ENCODE measurements at regions of chr21 and their contacts with region 1.

Region 1: DNA sequence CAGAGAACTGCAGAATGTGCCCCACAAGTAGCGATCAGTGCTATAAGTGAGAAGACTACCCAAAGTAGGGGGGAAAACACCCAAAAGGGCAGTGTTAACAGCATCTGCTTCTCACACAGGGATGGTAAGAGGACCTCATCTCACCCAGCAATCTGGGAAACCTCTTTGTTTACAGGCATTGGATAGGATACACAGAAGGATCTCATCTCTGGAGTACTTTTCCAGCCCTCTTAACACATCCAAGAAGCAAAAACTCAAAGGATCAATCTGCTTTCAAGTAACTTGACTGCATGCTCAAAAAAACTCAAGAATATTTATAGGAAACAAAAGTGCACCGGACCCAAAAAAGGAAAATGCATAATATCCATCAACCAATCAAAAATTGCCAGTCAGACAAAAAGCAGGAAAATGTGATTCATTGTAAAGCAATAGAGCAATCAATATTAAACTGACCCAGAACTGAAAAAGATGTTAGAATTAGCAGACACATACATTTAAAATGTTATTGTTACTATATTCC is 311.0 kb upstream of the CXADR start:
- DNase-seq: no peak
- H3K4me3 ChIP-seq: no peak overlapping the region
- H3K27ac ChIP-seq: no peak overlapping the region
- H3K4me1 ChIP-seq: no peaks in the 10 kb centered on the region
- H3K27me3 ChIP-seq: no peaks in the 10 kb centered on the region
- CTCF ChIP-seq: no peak
- POLR2A ChIP-seq: no peak

Region 2: DNA sequence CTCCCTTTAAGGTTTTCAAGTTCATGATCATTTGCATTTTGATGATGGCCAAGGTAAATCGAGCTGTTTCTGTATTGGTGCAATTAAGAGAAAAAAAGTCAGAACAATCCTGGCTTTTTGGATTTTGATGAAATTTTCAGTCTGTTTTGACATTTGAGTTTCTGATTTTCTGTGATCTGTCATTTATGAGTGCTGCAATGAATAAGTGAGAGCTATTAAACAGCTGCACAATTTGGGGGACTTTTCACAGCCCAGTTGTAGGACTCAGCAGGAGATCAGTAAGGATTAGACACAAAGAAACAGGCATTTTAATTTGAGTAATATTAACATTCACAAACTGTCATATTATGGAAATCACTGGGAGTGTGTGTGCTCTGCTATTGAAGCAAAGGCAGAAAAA is 141.9 kb before region 1 on chr21:
- CTCF ChIA-PET with region 1: no interaction called
- POLR2A ChIA-PET with region 1: no interaction called
- dilution Hi-C with region 1: no loop called
- intact Hi-C with region 1: no loop called
- DNase-seq: no peak
- H3K4me3 ChIP-seq: no peak overlapping the region
- H3K27ac ChIP-seq: no peak overlapping the region
- H3K4me1 ChIP-seq: no peaks in the 10 kb centered on the region
- H3K27me3 ChIP-seq: peaks cover 0 to 1% of the 10 kb centered on the region in 2 experiments
- CTCF ChIP-seq: no peak
- POLR2A ChIP-seq: no peak

Region 3: DNA sequence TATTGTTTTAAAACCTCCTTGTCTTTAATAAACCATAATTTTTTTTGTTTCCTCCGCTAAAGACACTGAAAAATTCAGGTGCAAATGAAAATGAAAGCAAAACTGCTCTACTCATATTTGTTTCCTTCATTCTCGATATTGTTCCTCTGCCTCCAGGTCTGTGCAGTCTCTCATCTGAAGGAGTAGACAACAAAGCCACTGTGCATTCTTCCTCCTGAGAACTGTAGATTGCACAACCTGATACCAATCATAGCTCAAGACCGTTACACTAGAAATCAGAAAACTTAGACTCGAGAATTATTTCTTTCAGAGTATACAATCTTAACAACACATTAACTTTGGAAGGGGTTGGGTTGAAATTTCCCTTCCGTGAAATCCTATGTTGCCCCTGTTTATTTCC is 62.1 kb before region 1 on chr21:
- CTCF ChIA-PET with region 1: no interaction called
- POLR2A ChIA-PET with region 1: no interaction called
- dilution Hi-C with region 1: no loop called
- intact Hi-C with region 1: loop called (anchors 10 kb)
- DNase-seq: peak; percentile 23
- H3K4me3 ChIP-seq: peak overlapping the region; percentile 2 to 39 (median 33)
- H3K27ac ChIP-seq: no peak overlapping the region
- H3K4me1 ChIP-seq: no peaks in the 10 kb centered on the region
- H3K27me3 ChIP-seq: no peaks in the 10 kb centered on the region
- CTCF ChIP-seq: no peak
- POLR2A ChIP-seq: no peak

Region 4: DNA sequence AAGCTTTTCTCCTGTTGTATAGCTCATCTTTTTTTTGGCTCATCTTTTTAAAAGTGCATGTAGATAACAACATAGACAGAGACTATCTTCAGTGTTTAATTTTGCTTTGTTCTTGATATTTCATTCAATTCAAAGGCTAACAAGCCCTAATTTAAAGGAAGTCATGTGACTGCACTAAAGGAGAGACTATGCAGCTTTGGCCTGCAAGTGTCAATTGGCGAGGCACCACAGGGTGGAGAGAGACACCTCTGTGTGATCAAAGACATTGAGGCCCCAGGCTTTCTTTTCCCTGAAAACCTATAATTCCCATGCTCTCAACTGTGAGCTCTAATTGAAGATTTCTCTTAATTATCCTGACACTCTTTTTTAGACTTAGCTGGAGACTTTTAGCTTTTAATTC is 1096.4 kb after region 1 on chr21:
- CTCF ChIA-PET with region 1: no interaction called
- POLR2A ChIA-PET with region 1: no interaction called
- dilution Hi-C with region 1: no loop called
- intact Hi-C with region 1: no loop called
- DNase-seq: no peak
- H3K4me3 ChIP-seq: no peak overlapping the region
- H3K27ac ChIP-seq: no peak overlapping the region
- H3K4me1 ChIP-seq: no peaks in the 10 kb centered on the region
- H3K27me3 ChIP-seq: no peaks in the 10 kb centered on the region
- CTCF ChIP-seq: no peak
- POLR2A ChIP-seq: no peak